HCT116 (cell line): ENCODE measurements at regions of chr2 and their contacts with region 1.

Region 1: GRCh38 chr2:44479122-44479887 is 117.6 kb downstream of the CAMKMT start:
- DNase-seq: peak; percentile 72
- ATAC-seq: peak; percentile 98
- H3K4me3 ChIP-seq: no peak overlapping the region
- H3K27ac ChIP-seq: no peak overlapping the region
- H3K4me1 ChIP-seq: no peaks in the 10 kb centered on the region
- H3K27me3 ChIP-seq: no peaks in the 10 kb centered on the region
- CTCF ChIP-seq: peak; percentile 99 to 100 (median 100)
- POLR2A ChIP-seq: no peak
- RAD21 ChIP-seq: peak; percentile 90

Region 2: DNA sequence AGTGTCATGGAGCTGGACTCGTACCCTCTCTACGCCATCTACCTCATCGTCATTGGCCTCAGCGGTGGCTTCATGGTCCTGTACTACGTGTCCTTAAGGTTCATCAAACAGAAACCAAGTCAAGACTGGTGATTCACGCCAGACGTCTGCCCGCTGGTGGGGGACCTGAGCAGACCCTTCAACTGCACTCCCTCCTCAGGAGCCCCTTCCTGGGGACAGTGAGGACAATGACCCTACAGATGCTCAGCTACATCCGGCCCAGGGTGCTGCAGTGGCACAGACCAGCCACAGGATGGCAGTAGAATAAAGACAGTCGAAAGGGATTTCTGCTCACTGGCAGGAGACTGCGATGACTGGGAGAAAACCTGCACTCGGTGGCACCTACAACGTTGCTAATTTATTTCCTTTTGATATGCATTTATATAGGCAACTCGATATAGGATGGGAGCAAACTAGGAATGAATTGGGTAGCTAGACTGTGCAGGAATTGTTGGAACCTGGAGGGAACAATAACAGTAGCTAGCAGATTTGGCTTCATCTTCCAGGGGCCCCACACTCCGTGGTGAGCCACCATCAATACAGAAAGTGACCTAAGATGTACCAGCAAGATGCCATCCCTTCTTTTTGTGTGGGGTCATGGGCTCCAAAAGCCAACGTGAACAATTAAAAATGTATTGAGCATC is 601.4 kb before region 1 on chr2:
- CTCF ChIA-PET with region 1: no interaction called
- POLR2A ChIA-PET with region 1: no interaction called
- RAD21 ChIA-PET with region 1: no interaction called
- intact Hi-C with region 1: loop called (anchors 10 kb)
- DNase-seq: peak; percentile 23
- ATAC-seq: peak; percentile 85
- H3K4me3 ChIP-seq: no peak overlapping the region
- H3K27ac ChIP-seq: no peak overlapping the region
- H3K4me1 ChIP-seq: 0 out of 4 replicates have a peak, but pooled peaks cover 0 to 6% of the 10 kb centered on the region in 2 experiments
- H3K27me3 ChIP-seq: 0 out of 2 replicates have a peak, but pooled peaks cover 4% of the 10 kb centered on the region
- CTCF ChIP-seq: peak; percentile 68 to 98 (median 97)
- POLR2A ChIP-seq: no peak
- RAD21 ChIP-seq: peak; percentile 93

Region 3: DNA sequence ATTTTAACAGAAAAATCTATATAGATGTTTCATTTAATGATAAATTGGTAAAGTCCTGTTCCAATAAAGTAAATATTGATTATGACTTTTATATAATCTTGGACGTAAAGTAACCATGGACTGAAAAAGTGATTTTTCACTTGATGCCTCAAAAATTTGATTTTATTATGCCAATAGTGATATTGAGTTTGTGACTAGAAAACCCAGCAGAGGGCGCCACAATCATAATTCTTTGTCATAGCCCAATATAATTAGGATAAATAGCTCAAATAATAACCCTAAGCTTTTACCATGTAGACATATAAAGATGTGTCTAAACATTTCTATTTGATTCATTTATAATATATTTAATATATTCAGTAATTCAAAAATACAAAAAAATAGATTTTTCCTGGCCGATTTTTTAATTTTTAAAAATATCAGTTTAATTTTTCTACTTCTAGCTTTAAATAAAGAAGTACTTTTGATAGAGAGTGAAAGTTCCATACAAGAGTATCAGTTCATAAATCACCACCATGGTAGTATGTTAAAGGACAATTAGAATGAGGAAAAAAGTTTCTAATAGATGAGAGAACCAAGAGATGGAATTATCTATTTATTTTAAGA is 86.9 kb before region 1 on chr2:
- CTCF ChIA-PET with region 1: interaction called, 32 read pairs
- POLR2A ChIA-PET with region 1: no interaction called
- RAD21 ChIA-PET with region 1: interaction called in 1 of 2 experiments, 5 read pairs
- intact Hi-C with region 1: loop called (anchors 1 kb)
- DNase-seq: peak; percentile 6
- ATAC-seq: no peak
- H3K4me3 ChIP-seq: no peak overlapping the region
- H3K27ac ChIP-seq: no peak overlapping the region
- H3K4me1 ChIP-seq: no peaks in the 10 kb centered on the region
- H3K27me3 ChIP-seq: no peaks in the 10 kb centered on the region
- CTCF ChIP-seq: peak; percentile 56 to 79 (median 62)
- POLR2A ChIP-seq: no peak
- RAD21 ChIP-seq: peak; percentile 57

Region 4: GRCh38 chr2:44490726-44491125 is 11.4 kb after region 1 on chr2:
- CTCF ChIA-PET with region 1: interaction called, 21 read pairs
- POLR2A ChIA-PET with region 1: no interaction called
- RAD21 ChIA-PET with region 1: no interaction called
- intact Hi-C with region 1: no loop called
- DNase-seq: no peak
- ATAC-seq: no peak
- H3K4me3 ChIP-seq: no peak overlapping the region
- H3K27ac ChIP-seq: no peak overlapping the region
- H3K4me1 ChIP-seq: no peaks in the 10 kb centered on the region
- H3K27me3 ChIP-seq: no peaks in the 10 kb centered on the region
- CTCF ChIP-seq: no peak
- POLR2A ChIP-seq: no peak
- RAD21 ChIP-seq: no peak

Region 5: GRCh38 chr2:44955593-44956392 is 476.5 kb after region 1 on chr2:
- CTCF ChIA-PET with region 1: interaction called, 42 read pairs
- POLR2A ChIA-PET with region 1: no interaction called
- RAD21 ChIA-PET with region 1: interaction called, 5 to 9 read pairs
- intact Hi-C with region 1: loop called (anchors 1 kb)
- DNase-seq: peak; percentile 46
- ATAC-seq: peak; percentile 85
- H3K4me3 ChIP-seq: peak overlapping the region; percentile 23 to 37; a peak in 2 of 4 replicates
- H3K27ac ChIP-seq: no peak overlapping the region
- H3K4me1 ChIP-seq: peaks cover 0 to 35% of the 10 kb centered on the region in 2 experiments; a peak in 3 of 4 replicates
- H3K27me3 ChIP-seq: no peaks in the 10 kb centered on the region
- CTCF ChIP-seq: peak; percentile 85 to 97 (median 89)
- POLR2A ChIP-seq: no peak
- RAD21 ChIP-seq: peak; percentile 99